CD8-positive, alpha-beta T cell (primary cell): ENCODE measurements at regions of chr2 and their contacts with region 1.

Region 1: DNA sequence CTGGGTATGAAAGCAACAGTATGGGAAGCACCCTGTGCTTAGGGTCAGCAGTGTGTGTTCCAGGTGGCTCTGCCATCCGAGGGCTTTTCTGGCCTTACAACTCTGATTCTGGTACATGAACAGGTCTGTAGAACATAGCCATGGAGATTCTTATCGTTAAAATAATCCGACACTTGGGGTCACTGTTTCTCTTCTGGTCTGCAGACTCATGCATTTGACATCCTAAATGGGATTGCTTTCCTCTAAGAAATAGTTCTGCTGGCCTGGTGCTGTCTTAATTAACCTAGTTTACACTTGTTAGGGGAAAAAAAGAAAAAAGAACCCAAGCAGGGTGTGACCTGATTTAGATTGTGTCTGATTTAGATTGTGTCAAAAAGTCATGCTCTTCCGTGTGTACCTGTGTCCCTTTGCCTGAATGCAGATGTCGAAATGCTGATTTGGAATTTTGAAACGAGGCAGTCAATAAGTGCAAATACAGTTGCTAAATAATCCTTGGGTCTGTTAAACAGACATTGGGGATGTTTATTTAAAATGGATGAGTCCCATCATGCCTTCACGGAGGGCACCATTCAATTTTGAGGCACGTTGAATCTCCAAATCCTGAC is 59.6 kb downstream of the TRPM8 start:
- DNase-seq: peak in 4 of 9 experiments; percentile 28 to 82 (median 66)
- ATAC-seq: peak; percentile 71
- H3K4me3 ChIP-seq: no peak overlapping the region
- H3K4me3 Mint-ChIP-seq: no peak overlapping the region
- H3K27ac ChIP-seq: no peak overlapping the region
- H3K27ac Mint-ChIP-seq: peak overlapping the region; percentile 8
- H3K4me1 ChIP-seq: peaks cover 8% of the 10 kb centered on the region
- H3K4me1 Mint-ChIP-seq: peaks cover 29% of the 10 kb centered on the region
- H3K27me3 ChIP-seq: no peaks in the 10 kb centered on the region
- H3K27me3 Mint-ChIP-seq: no peaks in the 10 kb centered on the region
- CTCF ChIP-seq: peak; percentile 58

Region 2: DNA sequence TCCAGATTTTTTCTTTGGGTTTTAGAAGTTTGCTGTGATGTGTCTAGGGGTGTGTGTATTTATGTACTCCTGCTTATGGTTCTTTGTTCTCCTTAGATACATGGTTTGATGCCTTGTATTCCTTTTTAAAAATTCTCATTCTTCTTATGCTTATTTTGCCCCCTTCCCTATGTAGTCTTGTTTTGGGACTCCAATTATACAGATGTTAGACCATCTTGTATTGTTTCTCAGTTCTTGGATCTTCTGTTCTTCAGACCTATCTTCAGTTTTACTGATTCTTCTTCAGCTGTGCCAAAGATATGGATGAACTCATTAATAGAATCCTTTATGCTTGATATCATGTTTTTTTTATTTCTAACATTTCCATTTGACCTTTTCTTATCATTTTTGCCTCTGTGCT is 94.4 kb before region 1 on chr2:
- CTCF ChIA-PET with region 1: no interaction called
- POLR2A ChIA-PET with region 1: no interaction called
- intact Hi-C with region 1: no loop called
- DNase-seq: no peak
- ATAC-seq: no peak
- H3K4me3 ChIP-seq: no peak overlapping the region
- H3K4me3 Mint-ChIP-seq: no peak overlapping the region
- H3K27ac ChIP-seq: no peak overlapping the region
- H3K27ac Mint-ChIP-seq: no peak overlapping the region
- H3K4me1 ChIP-seq: no peaks in the 10 kb centered on the region
- H3K4me1 Mint-ChIP-seq: no peaks in the 10 kb centered on the region
- H3K27me3 ChIP-seq: no peaks in the 10 kb centered on the region
- H3K27me3 Mint-ChIP-seq: peaks cover 31% of the 10 kb centered on the region
- CTCF ChIP-seq: no peak

Region 3: DNA sequence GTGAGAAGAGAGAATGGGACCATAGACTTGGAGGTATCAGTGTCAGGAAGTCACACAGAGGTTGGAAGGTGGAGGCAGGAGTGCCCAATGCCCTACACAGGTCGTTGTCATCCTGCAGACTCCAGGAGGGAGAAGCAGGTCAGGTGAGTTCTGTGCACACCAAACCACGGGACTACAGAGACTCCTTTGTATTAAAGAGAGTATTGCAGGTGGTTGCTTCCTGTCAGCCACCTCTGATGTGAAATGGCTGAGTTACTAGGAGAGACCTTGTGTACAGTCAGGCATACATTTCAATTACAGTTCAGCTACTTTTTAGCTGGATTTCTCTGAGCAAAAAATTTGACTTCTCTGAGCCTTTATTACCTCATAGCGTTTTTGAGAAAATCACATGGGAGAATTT is 125.3 kb after region 1 on chr2:
- CTCF ChIA-PET with region 1: interaction called, 5 read pairs
- POLR2A ChIA-PET with region 1: no interaction called
- intact Hi-C with region 1: loop called (anchors 1 to 5 kb)
- DNase-seq: peak in 4 of 9 experiments; percentile 15 to 66 (median 36)
- ATAC-seq: peak; percentile 81
- H3K4me3 ChIP-seq: no peak overlapping the region
- H3K4me3 Mint-ChIP-seq: peak overlapping the region; percentile 20
- H3K27ac ChIP-seq: no peak overlapping the region
- H3K27ac Mint-ChIP-seq: peak overlapping the region; percentile 28
- H3K4me1 ChIP-seq: peaks cover 40% of the 10 kb centered on the region
- H3K4me1 Mint-ChIP-seq: peaks cover 45% of the 10 kb centered on the region
- H3K27me3 ChIP-seq: no peaks in the 10 kb centered on the region
- H3K27me3 Mint-ChIP-seq: no peaks in the 10 kb centered on the region
- CTCF ChIP-seq: no peak

Region 4: GRCh38 chr2:234135720-234136221 is 159.0 kb after region 1 on chr2:
- CTCF ChIA-PET with region 1: interaction called, 9 read pairs
- POLR2A ChIA-PET with region 1: no interaction called
- intact Hi-C with region 1: loop called (anchors 1 to 2 kb)
- DNase-seq: peak; percentile 16 to 77 (median 48)
- ATAC-seq: peak; percentile 56
- H3K4me3 ChIP-seq: no peak overlapping the region
- H3K4me3 Mint-ChIP-seq: no peak overlapping the region
- H3K27ac ChIP-seq: no peak overlapping the region
- H3K27ac Mint-ChIP-seq: peak overlapping the region; percentile 64
- H3K4me1 ChIP-seq: peaks cover 25% of the 10 kb centered on the region
- H3K4me1 Mint-ChIP-seq: peaks cover 30% of the 10 kb centered on the region
- H3K27me3 ChIP-seq: no peaks in the 10 kb centered on the region
- H3K27me3 Mint-ChIP-seq: no peaks in the 10 kb centered on the region
- CTCF ChIP-seq: peak; percentile 62

Region 5: DNA sequence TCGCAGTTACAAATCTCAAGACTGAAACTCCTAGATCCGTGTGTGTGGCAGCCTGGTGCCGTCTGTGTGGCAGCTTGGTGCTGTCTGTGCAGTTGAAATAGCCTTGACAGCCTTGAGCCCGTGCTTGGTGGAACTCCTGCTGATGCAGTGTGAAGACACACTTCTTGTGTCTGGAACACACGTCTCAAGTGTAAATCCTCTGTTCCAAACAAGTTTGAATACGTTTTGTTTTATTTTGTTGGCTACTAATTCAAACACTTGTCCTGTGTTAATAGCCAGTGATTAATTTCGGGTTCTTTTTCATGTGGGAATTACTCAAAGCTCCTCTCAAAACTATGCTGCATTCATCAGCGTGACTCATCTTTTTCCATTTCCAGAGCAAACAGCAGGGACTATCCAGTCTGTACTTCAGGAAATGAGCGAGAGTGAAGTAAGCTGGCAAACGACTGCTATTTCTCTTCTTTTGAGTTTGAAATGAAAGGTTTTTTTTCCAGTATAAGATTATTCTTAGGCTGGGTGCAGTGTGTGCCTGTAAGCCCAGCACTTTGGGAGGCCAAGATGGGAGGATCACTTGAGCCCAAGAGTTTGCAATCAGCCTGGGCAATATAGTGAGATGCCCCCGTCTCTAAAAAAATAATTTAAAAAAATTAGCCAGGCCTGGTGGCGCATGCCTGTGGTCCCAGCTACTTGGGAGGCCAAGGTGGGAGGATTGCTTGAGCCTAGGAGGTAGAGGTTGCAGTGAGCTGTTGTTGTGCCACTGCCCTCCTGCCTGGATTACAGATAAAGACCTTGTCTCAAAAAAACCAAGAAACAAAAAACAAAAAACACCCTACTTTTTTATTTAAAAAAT is 226.6 kb after region 1 on chr2:
- CTCF ChIA-PET with region 1: no interaction called
- POLR2A ChIA-PET with region 1: no interaction called
- intact Hi-C with region 1: no loop called
- DNase-seq: no peak
- ATAC-seq: no peak
- H3K4me3 ChIP-seq: no peak overlapping the region
- H3K4me3 Mint-ChIP-seq: no peak overlapping the region
- H3K27ac ChIP-seq: no peak overlapping the region
- H3K27ac Mint-ChIP-seq: no peak overlapping the region
- H3K4me1 ChIP-seq: no peaks in the 10 kb centered on the region
- H3K4me1 Mint-ChIP-seq: peaks cover 1% of the 10 kb centered on the region
- H3K27me3 ChIP-seq: no peaks in the 10 kb centered on the region
- H3K27me3 Mint-ChIP-seq: no peaks in the 10 kb centered on the region
- CTCF ChIP-seq: no peak

Region 6: DNA sequence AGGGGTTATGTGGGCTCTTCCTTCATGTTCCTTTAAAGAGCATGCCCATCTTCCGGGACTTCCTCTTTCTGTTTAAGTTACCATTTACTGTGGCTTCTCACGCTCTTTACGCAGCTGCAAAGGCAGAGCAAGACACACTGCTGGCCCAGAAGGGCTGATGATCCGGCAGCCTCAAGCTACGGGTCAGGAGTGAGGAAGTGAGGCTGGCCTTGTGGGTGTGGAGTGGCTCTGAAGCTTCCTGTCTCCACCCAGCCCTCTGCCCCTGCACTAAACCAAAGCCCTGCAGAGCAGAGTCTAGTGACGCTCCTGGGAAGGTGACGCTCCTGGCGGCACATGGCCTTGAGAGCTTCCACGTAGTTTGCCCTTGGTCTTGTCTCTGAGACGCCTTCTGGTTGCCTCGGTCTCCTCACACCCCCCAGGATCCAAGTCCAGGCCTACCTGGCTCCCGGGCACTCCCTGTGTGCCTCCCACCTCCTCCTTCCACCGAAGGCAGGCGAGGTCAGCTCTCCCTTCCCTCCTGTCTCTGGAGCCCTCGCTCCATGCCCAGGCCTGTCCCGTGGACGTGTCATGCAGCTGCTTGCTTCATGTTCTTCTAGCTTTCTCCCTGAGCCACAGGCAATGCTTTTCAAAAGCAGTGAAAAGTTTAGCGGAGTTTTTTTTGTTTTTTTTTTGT is 469.7 kb after region 1 on chr2:
- CTCF ChIA-PET with region 1: no interaction called
- POLR2A ChIA-PET with region 1: interaction called, 10 read pairs
- intact Hi-C with region 1: no loop called
- DNase-seq: peak; percentile 63 to 97 (median 81)
- ATAC-seq: peak; percentile 84
- H3K4me3 ChIP-seq: no peak overlapping the region
- H3K4me3 Mint-ChIP-seq: peak overlapping the region; percentile 70
- H3K27ac ChIP-seq: peak overlapping the region; percentile 90 to 94
- H3K27ac Mint-ChIP-seq: peak overlapping the region; percentile 98
- H3K4me1 ChIP-seq: peaks cover 82% of the 10 kb centered on the region
- H3K4me1 Mint-ChIP-seq: peaks cover 84% of the 10 kb centered on the region
- H3K27me3 ChIP-seq: no peaks in the 10 kb centered on the region
- H3K27me3 Mint-ChIP-seq: no peaks in the 10 kb centered on the region
- CTCF ChIP-seq: no peak

Region 7: DNA sequence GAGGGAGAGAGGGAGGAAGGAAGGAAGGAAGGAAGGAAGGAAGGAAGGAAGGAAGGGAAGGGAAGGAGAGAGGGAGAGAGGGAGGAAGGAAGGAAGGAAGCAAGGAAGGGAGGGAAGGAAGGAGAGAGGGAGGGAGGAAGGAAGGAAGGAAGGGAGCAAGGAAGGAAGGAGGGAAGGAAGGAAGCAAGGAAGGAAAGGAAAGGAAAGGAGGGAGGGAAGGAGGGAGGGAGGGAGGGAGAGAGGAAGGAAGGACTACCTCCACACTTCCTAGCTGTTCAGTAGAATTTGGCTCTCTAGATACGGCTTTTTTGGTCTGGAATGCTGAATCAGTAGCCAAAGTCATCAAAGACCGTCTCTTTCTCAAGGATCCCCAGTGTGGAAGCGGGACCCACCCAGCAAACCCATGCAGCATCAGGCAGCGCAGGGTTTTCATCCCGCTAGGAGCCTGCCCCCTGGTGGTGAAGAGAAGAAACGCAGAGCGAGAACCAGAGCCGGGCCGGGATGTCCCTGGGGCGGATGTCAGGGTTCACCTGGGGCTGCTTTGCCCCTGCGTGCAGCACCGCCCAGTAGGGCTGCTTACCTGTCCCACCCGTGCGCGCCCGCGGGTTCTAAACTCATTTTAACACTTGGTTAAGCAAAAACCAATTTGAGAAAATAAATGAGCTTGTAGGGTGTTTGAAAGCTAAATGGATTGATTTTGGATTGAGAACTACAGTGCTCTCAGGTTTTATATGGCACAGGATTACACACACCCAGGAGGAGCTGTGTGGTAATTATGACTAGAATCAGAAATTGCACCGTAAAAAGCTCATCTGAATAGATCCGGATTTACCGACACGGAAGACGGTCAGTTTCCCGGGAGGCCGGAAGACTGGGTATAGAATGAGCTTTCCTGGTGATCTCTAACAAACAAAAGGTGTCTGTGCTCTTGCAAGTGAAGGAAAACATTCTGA is 568.1 kb after region 1 on chr2:
- CTCF ChIA-PET with region 1: interaction called, 12 read pairs
- POLR2A ChIA-PET with region 1: no interaction called
- intact Hi-C with region 1: loop called (anchors 1 kb)
- DNase-seq: peak; percentile 56 to 86 (median 79)
- ATAC-seq: peak; percentile 95
- H3K4me3 ChIP-seq: no peak overlapping the region
- H3K4me3 Mint-ChIP-seq: no peak overlapping the region
- H3K27ac ChIP-seq: no peak overlapping the region
- H3K27ac Mint-ChIP-seq: no peak overlapping the region
- H3K4me1 ChIP-seq: no peaks in the 10 kb centered on the region
- H3K4me1 Mint-ChIP-seq: peaks cover 5% of the 10 kb centered on the region
- H3K27me3 ChIP-seq: no peaks in the 10 kb centered on the region
- H3K27me3 Mint-ChIP-seq: peaks cover 23% of the 10 kb centered on the region
- CTCF ChIP-seq: peak; percentile 83

Region 8: GRCh38 chr2:235116885-235117492 is 1140.2 kb after region 1 on chr2:
- CTCF ChIA-PET with region 1: no interaction called
- POLR2A ChIA-PET with region 1: no interaction called
- intact Hi-C with region 1: loop called in 1 of 2 experiments (anchors 2 kb)
- DNase-seq: peak in 2 of 9 experiments; percentile 31 to 41
- ATAC-seq: no peak
- H3K4me3 ChIP-seq: no peak overlapping the region
- H3K4me3 Mint-ChIP-seq: no peak overlapping the region
- H3K27ac ChIP-seq: no peak overlapping the region
- H3K27ac Mint-ChIP-seq: no peak overlapping the region
- H3K4me1 ChIP-seq: no peaks in the 10 kb centered on the region
- H3K4me1 Mint-ChIP-seq: no peaks in the 10 kb centered on the region
- H3K27me3 ChIP-seq: peaks cover 0 to 2% of the 10 kb centered on the region in 2 experiments
- H3K27me3 Mint-ChIP-seq: peaks cover 14% of the 10 kb centered on the region
- CTCF ChIP-seq: peak; percentile 65